WTC11 (cell line): ENCODE measurements at regions of chr18 and their contacts with region 1.

Region 1: DNA sequence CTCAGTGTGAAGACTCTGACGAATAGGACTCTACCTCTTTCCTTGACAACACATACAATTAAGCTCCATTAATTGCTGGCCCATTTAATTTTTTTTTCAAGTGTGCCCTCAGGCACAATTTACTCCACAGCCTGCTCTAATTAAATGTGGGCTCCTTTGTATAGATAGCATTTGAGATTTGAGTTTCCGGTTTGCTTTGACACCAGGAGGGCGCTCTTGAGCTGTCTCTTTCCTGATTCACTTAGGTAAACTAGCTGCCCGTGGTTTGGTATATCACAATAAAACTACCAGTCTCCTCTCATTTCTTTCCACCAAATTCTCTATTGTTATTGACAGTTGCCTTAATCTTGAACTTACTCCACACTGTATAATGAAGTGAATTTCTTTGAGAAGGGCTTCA is 666.0 kb downstream of the DSC3 start:
- DNase-seq: peak; percentile 62
- ATAC-seq: peak; percentile 94
- H3K4me3 Mint-ChIP-seq: no peak overlapping the region
- H3K27ac Mint-ChIP-seq: no peak overlapping the region
- H3K4me1 Mint-ChIP-seq: peaks cover 15% of the 10 kb centered on the region
- H3K27me3 Mint-ChIP-seq: no peaks in the 10 kb centered on the region; the same call in 1 of the 2 replicates
- CTCF ChIP-seq: peak; percentile 51; the same call in 1 of the 2 replicates

Region 2: GRCh38 chr18:30265190-30265589 is 111.3 kb before region 1 on chr18:
- CTCF ChIA-PET with region 1: no interaction called
- POLR2A ChIA-PET with region 1: no interaction called
- DNase-seq: no peak
- ATAC-seq: no peak
- H3K4me3 Mint-ChIP-seq: no peak overlapping the region
- H3K27ac Mint-ChIP-seq: no peak overlapping the region
- H3K4me1 Mint-ChIP-seq: no peaks in the 10 kb centered on the region
- H3K27me3 Mint-ChIP-seq: no peaks in the 10 kb centered on the region
- CTCF ChIP-seq: no peak

Region 3: DNA sequence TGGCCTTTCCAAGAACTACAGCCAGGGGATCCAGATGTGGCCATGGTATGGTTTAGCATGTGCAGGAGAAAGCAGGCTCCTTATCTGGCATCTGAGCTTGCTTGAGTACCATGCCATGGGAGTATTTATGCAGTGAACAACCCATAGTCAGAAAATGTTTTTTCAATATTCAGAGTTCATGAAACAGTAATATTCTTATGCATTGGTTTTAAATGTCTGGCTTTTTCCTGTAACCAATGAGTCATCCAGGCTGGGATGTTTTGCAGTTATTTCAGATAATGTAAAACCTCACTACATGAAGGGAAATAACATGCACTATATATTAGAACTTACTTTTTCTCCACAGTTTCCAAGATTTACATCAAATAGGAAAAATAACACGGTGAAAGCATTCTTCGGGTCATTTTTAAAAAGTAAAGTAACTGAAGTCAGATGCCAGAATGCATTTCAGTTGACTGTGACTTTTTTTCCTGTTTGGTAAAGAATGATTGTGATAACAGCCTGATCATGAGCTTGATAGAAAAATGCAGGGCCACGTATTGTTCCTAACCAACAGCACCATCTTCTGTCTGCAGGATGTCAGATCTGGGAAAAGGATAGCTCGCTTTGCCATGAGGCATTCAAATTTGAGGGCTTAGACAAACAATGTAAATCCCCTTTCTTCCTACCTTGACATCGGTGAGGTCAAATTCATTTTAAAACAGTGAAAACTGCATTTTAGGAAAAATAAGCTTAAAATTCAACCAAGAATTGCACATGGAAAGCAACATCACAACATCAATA is 513.2 kb after region 1 on chr18:
- CTCF ChIA-PET with region 1: interaction called, 28 read pairs
- POLR2A ChIA-PET with region 1: interaction called, 3 read pairs
- DNase-seq: peak; percentile 14
- ATAC-seq: peak; percentile 81
- H3K4me3 Mint-ChIP-seq: no peak overlapping the region
- H3K27ac Mint-ChIP-seq: no peak overlapping the region
- H3K4me1 Mint-ChIP-seq: peaks cover 41% of the 10 kb centered on the region
- H3K27me3 Mint-ChIP-seq: peaks cover 8% of the 10 kb centered on the region; the same call in 1 of the 2 replicates
- CTCF ChIP-seq: no peak